IMR-90 (cell line): ENCODE measurements at regions of chr7 and their contacts with region 1.

Region 1: GRCh38 chr7:90346336-90347125 is at the start of gene GTPBP10:
- DNase-seq: peak; percentile 96
- ATAC-seq: peak; percentile 97
- H3K4me3 ChIP-seq: peak within 1 kb of the TSS; percentile 89
- H3K27ac ChIP-seq: peak within 1 kb of the TSS; percentile 91
- H3K4me1 ChIP-seq: no peaks in the 10 kb centered on the region; the same call in 1 of the 2 replicates
- H3K27me3 ChIP-seq: no peaks in the 10 kb centered on the region
- CTCF ChIP-seq: peak; percentile 73
- POLR2A ChIP-seq: peak; percentile 93
- RAD21 ChIP-seq: peak; percentile 37
- total RNA-seq, gene GTPBP10: 11.5 and 25.3 TPM in 2 replicates

Region 2: GRCh38 chr7:90022213-90022612 is 324.3 kb before region 1 on chr7:
- CTCF ChIA-PET with region 1: no interaction called
- POLR2A ChIA-PET with region 1: no interaction called
- dilution Hi-C with region 1: no loop called
- in situ Hi-C with region 1: no loop called
- intact Hi-C with region 1: no loop called
- DNase-seq: no peak
- ATAC-seq: no peak
- H3K4me3 ChIP-seq: no peak overlapping the region
- H3K27ac ChIP-seq: no peak overlapping the region
- H3K4me1 ChIP-seq: no peaks in the 10 kb centered on the region
- H3K27me3 ChIP-seq: no peaks in the 10 kb centered on the region
- CTCF ChIP-seq: no peak
- POLR2A ChIP-seq: no peak
- RAD21 ChIP-seq: no peak

Region 3: GRCh38 chr7:90403174-90404113 is 56.9 kb after region 1 on chr7 and contains the start of gene CLDN12:
- CTCF ChIA-PET with region 1: no interaction called
- POLR2A ChIA-PET with region 1: no interaction called
- dilution Hi-C with region 1: no loop called
- in situ Hi-C with region 1: no loop called
- intact Hi-C with region 1: loop called (anchors 1 kb)
- DNase-seq: peak; percentile 99
- ATAC-seq: peak; percentile 98
- H3K4me3 ChIP-seq: peak within 1 kb of the TSS; percentile 52
- H3K27ac ChIP-seq: peak within 1 kb of the TSS; percentile 27
- H3K4me1 ChIP-seq: no peaks in the 10 kb centered on the region
- H3K27me3 ChIP-seq: no peaks in the 10 kb centered on the region
- CTCF ChIP-seq: no peak
- POLR2A ChIP-seq: peak; percentile 92
- RAD21 ChIP-seq: no peak
- total RNA-seq, gene CLDN12: 42.5 and 46.4 TPM in 2 replicates